Lower leg skin (tissue), 4 donors: ENCODE measurements at regions of chr16 and their contacts with region 1.

Region 1: GRCh38 chr16:58025351-58026138 is at the start of gene MMP15:
- DNase-seq: peak; percentile 48 to 94
- H3K4me3 ChIP-seq: peak within 1 kb of the TSS; percentile 43
- CTCF ChIP-seq: no peak
- POLR2A ChIP-seq: no peak
- total RNA-seq, gene MMP15: 5.2 to 9.1 (median 7.7) TPM

Region 2: DNA sequence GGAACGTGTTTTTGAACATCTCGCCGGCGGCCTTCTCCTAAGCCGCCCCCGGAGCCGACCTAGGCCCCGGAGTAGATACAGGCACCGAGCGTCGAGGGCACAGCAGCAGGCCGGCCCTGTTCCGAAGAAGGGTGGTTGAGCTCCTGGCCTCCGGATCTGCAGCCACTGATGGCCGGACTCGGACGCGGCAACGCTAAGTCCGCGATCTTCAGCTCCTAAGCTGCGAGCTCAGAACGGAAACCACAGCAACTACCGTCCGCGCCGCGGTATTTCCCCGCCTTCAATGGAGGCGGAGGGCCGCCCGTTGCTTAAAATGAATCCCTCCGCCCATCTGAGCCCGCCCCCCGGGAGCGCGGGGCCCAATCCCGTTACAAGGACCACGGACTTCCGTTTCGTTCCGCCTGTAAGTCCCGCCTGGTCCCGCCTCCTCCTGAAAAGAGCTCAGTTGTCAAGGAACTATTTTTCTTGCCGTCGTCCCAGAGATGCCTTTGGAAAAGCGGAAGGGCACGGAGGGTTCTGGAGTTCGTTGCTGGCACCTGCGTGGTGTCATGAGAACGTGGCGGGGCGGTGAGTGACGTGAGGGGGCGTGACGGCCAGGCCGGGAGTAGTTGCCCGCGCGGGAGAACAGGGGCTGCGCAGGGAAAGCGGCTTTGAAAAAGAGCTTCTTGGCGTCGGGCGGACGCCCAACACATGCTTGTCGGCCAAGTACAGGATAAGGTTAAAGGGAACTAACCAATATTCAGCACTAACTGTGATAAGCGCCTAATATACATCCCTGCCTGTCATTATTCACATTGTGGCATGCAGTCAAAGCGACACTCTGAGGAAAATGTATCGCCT is 103.8 kb after region 1 on chr16 and contains the start of gene CFAP20:
- intact Hi-C with region 1: loop called (anchors 10 kb)
- DNase-seq: peak; percentile 99 to 100
- H3K4me3 ChIP-seq: peak within 1 kb of the TSS; percentile 93
- CTCF ChIP-seq: no peak
- POLR2A ChIP-seq: peak in 1 of 2 donors; percentile 60
- total RNA-seq, gene CFAP20: 46.6 to 66.6 (median 58.9) TPM